ENCODE measurements at regions of chr1 and their contacts with region 1.

Region 1: DNA sequence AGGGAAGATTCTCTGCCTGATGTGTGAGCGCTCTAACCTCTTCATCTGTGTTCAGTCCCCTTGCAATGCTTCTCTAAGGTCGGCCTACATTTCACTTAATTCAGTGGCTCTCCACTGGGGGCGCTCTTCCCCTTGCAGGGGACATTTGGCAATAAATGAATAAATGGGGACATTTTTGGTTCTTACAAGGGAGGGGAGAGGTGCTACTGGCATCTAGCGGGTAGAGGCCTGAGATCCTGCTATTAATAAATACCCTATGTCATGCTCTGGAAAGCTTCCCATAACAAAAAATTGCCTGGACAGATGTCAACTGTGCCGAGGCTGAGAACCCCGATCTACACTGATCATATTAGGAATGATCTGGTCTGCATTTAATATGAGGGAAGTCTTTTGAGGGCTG is 25.9 kb upstream of the DNAJC11 start:
- DNase-seq: peak; percentile 19 to 74 (median 49)
- ATAC-seq: peak; percentile 68
- H3K4me3 ChIP-seq: no peak overlapping the region
- H3K4me3 Mint-ChIP-seq: no peak overlapping the region
- H3K27ac ChIP-seq: no peak overlapping the region
- H3K27ac Mint-ChIP-seq: no peak overlapping the region
- H3K4me1 ChIP-seq: no peaks in the 10 kb centered on the region
- H3K4me1 Mint-ChIP-seq: no peaks in the 10 kb centered on the region
- H3K27me3 ChIP-seq: peaks cover 0 to 3% of the 10 kb centered on the region in 2 experiments
- H3K27me3 Mint-ChIP-seq: peaks cover 10% of the 10 kb centered on the region
- CTCF ChIP-seq: peak; percentile 83

Region 2: GRCh38 chr1:6757719-6758435 is 30.3 kb after region 1 on chr1:
- CTCF ChIA-PET with region 1: no interaction called
- POLR2A ChIA-PET with region 1: no interaction called
- intact Hi-C with region 1: no loop called
- DNase-seq: no peak
- ATAC-seq: no peak
- H3K4me3 ChIP-seq: no peak overlapping the region
- H3K4me3 Mint-ChIP-seq: no peak overlapping the region
- H3K27ac ChIP-seq: no peak overlapping the region
- H3K27ac Mint-ChIP-seq: no peak overlapping the region
- H3K4me1 ChIP-seq: no peaks in the 10 kb centered on the region
- H3K4me1 Mint-ChIP-seq: no peaks in the 10 kb centered on the region
- H3K27me3 ChIP-seq: peaks cover 0 to 3% of the 10 kb centered on the region in 2 experiments
- H3K27me3 Mint-ChIP-seq: peaks cover 31% of the 10 kb centered on the region
- CTCF ChIP-seq: no peak

Region 3: GRCh38 chr1:6889875-6890480 is 162.4 kb after region 1 on chr1:
- CTCF ChIA-PET with region 1: no interaction called
- POLR2A ChIA-PET with region 1: no interaction called
- intact Hi-C with region 1: loop called (anchors 1 to 2 kb)
- DNase-seq: peak in 13 of 14 experiments; percentile 2 to 62 (median 17)
- ATAC-seq: no peak
- H3K4me3 ChIP-seq: no peak overlapping the region
- H3K4me3 Mint-ChIP-seq: no peak overlapping the region
- H3K27ac ChIP-seq: no peak overlapping the region
- H3K27ac Mint-ChIP-seq: no peak overlapping the region
- H3K4me1 ChIP-seq: no peaks in the 10 kb centered on the region
- H3K4me1 Mint-ChIP-seq: no peaks in the 10 kb centered on the region
- H3K27me3 ChIP-seq: no peaks in the 10 kb centered on the region
- H3K27me3 Mint-ChIP-seq: no peaks in the 10 kb centered on the region
- CTCF ChIP-seq: peak; percentile 69

Region 4: DNA sequence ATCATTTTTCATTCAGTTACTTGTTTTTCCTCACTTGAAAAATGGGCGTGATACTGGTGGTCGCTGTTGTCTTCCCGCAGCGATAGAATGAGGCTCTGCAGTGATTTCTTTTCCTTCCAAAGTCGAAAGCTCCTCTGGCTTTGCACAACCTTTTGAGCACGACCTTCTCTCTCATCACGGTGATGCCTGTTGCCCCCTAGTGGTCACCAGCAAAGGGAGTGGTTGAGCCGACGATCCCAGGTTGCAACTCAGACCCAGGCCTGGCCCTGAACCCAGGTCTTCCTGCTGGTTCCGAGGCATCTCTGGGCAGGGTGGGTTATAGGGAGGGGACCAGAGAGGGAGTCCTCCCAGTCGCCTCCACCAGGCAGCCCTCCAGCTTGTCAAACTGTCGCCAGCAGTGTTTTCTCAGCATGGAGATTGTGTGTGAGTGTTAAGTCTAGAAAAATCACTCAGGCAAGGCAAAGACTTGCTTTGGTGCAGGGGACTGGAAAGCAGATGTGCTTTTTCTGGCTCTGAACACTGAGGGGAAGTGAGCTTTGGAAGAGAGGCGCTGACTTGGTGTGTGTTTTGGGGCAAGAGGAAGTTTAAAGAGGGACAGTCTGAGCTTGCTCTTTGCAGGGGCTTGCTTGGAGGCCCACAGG is 343.0 kb after region 1 on chr1:
- CTCF ChIA-PET with region 1: no interaction called
- POLR2A ChIA-PET with region 1: no interaction called
- intact Hi-C with region 1: loop called in 1 of 2 experiments (anchors 2 kb)
- DNase-seq: peak; percentile 14 to 69 (median 32)
- ATAC-seq: no peak
- H3K4me3 ChIP-seq: no peak overlapping the region
- H3K4me3 Mint-ChIP-seq: no peak overlapping the region
- H3K27ac ChIP-seq: no peak overlapping the region
- H3K27ac Mint-ChIP-seq: no peak overlapping the region
- H3K4me1 ChIP-seq: peaks cover 6% of the 10 kb centered on the region
- H3K4me1 Mint-ChIP-seq: peaks cover 7% of the 10 kb centered on the region
- H3K27me3 ChIP-seq: peaks cover 2 to 21% of the 10 kb centered on the region in 2 experiments
- H3K27me3 Mint-ChIP-seq: peaks cover 45% of the 10 kb centered on the region
- CTCF ChIP-seq: peak; percentile 79

Region 5: GRCh38 chr1:7646981-7647901 is 919.7 kb after region 1 on chr1:
- CTCF ChIA-PET with region 1: no interaction called
- POLR2A ChIA-PET with region 1: no interaction called
- intact Hi-C with region 1: loop called in 1 of 2 experiments (anchors 5 kb)
- DNase-seq: peak; percentile 38 to 76 (median 62)
- ATAC-seq: peak; percentile 59
- H3K4me3 ChIP-seq: no peak overlapping the region
- H3K4me3 Mint-ChIP-seq: no peak overlapping the region
- H3K27ac ChIP-seq: no peak overlapping the region
- H3K27ac Mint-ChIP-seq: no peak overlapping the region
- H3K4me1 ChIP-seq: peaks cover 8% of the 10 kb centered on the region
- H3K4me1 Mint-ChIP-seq: no peaks in the 10 kb centered on the region
- H3K27me3 ChIP-seq: no peaks in the 10 kb centered on the region
- H3K27me3 Mint-ChIP-seq: no peaks in the 10 kb centered on the region
- CTCF ChIP-seq: peak; percentile 89

Region 6: GRCh38 chr1:8154621-8155052 is 1427.1 kb after region 1 on chr1:
- CTCF ChIA-PET with region 1: no interaction called
- POLR2A ChIA-PET with region 1: no interaction called
- intact Hi-C with region 1: no loop called
- DNase-seq: no peak
- ATAC-seq: no peak
- H3K4me3 ChIP-seq: no peak overlapping the region
- H3K4me3 Mint-ChIP-seq: no peak overlapping the region
- H3K27ac ChIP-seq: no peak overlapping the region
- H3K27ac Mint-ChIP-seq: peak overlapping the region; percentile 34
- H3K4me1 ChIP-seq: peaks cover 53% of the 10 kb centered on the region
- H3K4me1 Mint-ChIP-seq: peaks cover 51% of the 10 kb centered on the region
- H3K27me3 ChIP-seq: no peaks in the 10 kb centered on the region
- H3K27me3 Mint-ChIP-seq: peaks cover 15% of the 10 kb centered on the region
- CTCF ChIP-seq: no peak

Measured in CD4-positive, alpha-beta T cell (primary cell).